ENCODE measurements at regions of chr6 and their contacts with region 1.

Region 1: DNA sequence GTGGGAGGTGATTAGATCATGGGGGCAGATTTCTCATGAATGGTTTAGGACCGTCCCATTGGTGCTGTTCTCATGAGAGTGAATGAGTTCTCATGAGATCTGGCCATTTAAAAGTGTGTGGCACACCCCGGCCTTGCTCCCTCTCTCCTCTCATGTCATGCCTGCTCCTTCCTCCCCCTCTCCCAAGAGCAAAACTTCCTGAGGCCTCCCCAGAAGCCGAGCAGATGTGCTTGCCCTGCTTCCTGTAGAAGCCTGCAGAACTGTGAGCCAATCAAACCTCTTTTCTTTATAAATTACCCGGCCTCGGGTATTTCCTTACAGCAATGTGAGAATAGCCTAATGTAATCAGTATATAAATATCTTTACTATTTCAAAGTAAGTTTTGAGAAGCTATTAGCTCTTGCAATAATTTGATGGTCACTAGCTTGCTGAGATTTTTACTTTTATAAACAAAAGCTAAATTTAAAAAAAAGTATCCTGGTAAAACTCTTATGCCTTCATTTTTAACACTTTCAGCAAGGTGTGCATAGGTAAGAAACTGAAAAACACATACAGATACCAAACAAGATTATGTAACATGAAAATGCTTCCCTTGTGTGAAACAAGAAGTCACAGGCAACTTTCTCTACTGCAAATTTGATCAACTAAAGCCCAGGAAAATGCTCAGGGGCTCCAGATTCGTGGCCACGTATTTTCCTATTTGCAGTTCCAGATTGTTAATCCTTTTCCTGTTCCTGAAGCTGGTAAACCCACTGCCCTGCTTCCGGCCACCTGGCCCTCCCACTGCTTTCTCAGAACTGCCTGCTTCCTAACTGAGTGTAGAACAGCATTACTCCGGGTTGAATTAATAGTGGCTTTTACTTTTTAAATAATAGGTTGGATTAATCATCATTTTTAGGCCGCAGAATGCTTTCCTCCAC is 395.1 kb upstream of the CNR1 start:
- DNase-seq: no peak
- H3K4me3 ChIP-seq: no peak overlapping the region
- H3K27ac ChIP-seq: no peak overlapping the region
- H3K4me1 ChIP-seq: no peaks in the 10 kb centered on the region
- H3K27me3 ChIP-seq: no peaks in the 10 kb centered on the region
- CTCF ChIP-seq: no peak

Region 2: GRCh38 chr6:87700397-87701186 is 860.7 kb before region 1 on chr6:
- CTCF ChIA-PET with region 1: no interaction called
- dilution Hi-C with region 1: no loop called
- in situ Hi-C with region 1: no loop called
- intact Hi-C with region 1: no loop called
- DNase-seq: peak; percentile 79
- H3K4me3 ChIP-seq: peak overlapping the region; percentile 68 to 90 (median 85)
- H3K27ac ChIP-seq: peak overlapping the region; percentile 94
- H3K4me1 ChIP-seq: peaks cover 10% of the 10 kb centered on the region
- H3K27me3 ChIP-seq: no peaks in the 10 kb centered on the region
- CTCF ChIP-seq: peak in 1 of 2 donors; percentile 28

Region 3: GRCh38 chr6:88403486-88403885 is 157.8 kb before region 1 on chr6:
- CTCF ChIA-PET with region 1: no interaction called
- dilution Hi-C with region 1: no loop called
- in situ Hi-C with region 1: no loop called
- intact Hi-C with region 1: no loop called
- DNase-seq: no peak
- H3K4me3 ChIP-seq: no peak overlapping the region
- H3K27ac ChIP-seq: no peak overlapping the region
- H3K4me1 ChIP-seq: no peaks in the 10 kb centered on the region
- H3K27me3 ChIP-seq: no peaks in the 10 kb centered on the region
- CTCF ChIP-seq: no peak

Region 4: GRCh38 chr6:88609973-88610372 is 48.7 kb after region 1 on chr6:
- CTCF ChIA-PET with region 1: no interaction called
- dilution Hi-C with region 1: loop called (anchors 5 kb)
- in situ Hi-C with region 1: no loop called
- intact Hi-C with region 1: no loop called
- DNase-seq: no peak
- H3K4me3 ChIP-seq: no peak overlapping the region
- H3K27ac ChIP-seq: no peak overlapping the region
- H3K4me1 ChIP-seq: no peaks in the 10 kb centered on the region
- H3K27me3 ChIP-seq: no peaks in the 10 kb centered on the region
- CTCF ChIP-seq: no peak

Measured in mammary epithelial cell (primary cell).